PC-3 (cell line): ENCODE measurements at regions of chr12 and their contacts with region 1.

Region 1: DNA sequence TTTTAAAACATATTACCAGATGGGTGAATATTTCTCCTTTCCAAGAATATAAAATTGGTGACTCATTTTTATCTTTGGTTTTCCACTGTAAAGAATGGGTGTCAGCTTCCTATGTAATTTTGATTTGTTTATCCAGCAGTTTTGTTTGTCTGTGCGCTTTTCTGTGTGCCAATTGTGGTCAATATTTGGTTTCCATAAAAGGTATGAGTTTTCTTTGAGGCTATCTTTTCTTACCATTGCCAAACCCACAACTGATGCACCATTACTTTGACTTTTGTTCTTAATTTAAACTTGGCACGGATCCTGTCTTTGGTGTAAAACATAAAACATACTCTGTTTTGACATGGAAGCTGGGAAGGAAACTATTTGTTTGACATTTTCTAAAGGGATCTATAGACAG is 78.8 kb upstream of the NAV3 start:
- DNase-seq: peak; percentile 82
- ATAC-seq: peak; percentile 95
- H3K4me3 ChIP-seq: no peak overlapping the region
- H3K27ac ChIP-seq: no peak overlapping the region
- H3K4me1 ChIP-seq: peaks cover 13% of the 10 kb centered on the region
- H3K27me3 ChIP-seq: peaks cover 40% of the 10 kb centered on the region
- CTCF ChIP-seq: no peak

Region 2: DNA sequence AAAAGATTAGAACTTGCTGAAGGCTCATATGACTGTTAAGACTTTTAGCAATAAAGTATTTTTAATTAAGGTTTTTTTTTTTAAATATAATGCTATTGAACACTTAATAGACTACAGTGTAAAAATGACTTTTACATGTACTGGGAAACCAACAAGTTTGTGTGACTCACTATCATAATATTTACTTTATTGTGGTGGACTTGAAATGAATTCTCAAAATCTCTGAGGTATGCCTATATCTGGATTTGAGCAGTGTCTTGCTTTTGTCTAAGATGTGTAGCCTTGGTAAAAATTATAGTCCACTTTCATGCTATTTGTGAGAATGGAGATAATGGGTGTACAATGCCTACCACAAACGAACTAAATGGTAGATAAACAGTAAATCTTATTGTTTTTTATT is 44.8 kb after region 1 on chr12:
- CTCF ChIA-PET with region 1: no interaction called
- POLR2A ChIA-PET with region 1: no interaction called
- intact Hi-C with region 1: loop called (anchors 5 kb)
- DNase-seq: peak; percentile 70
- ATAC-seq: peak; percentile 90
- H3K4me3 ChIP-seq: no peak overlapping the region
- H3K27ac ChIP-seq: no peak overlapping the region
- H3K4me1 ChIP-seq: peaks cover 8% of the 10 kb centered on the region
- H3K27me3 ChIP-seq: no peaks in the 10 kb centered on the region
- CTCF ChIP-seq: no peak

Region 3: GRCh38 chr12:77925536-77926108 is 173.7 kb after region 1 on chr12:
- CTCF ChIA-PET with region 1: interaction called, 3 read pairs
- POLR2A ChIA-PET with region 1: no interaction called
- intact Hi-C with region 1: loop called (anchors 1 kb)
- DNase-seq: peak; percentile 90
- ATAC-seq: peak; percentile 100
- H3K4me3 ChIP-seq: no peak overlapping the region
- H3K27ac ChIP-seq: no peak overlapping the region
- H3K4me1 ChIP-seq: no peaks in the 10 kb centered on the region
- H3K27me3 ChIP-seq: peaks cover 26% of the 10 kb centered on the region
- CTCF ChIP-seq: peak; percentile 100

Region 4: DNA sequence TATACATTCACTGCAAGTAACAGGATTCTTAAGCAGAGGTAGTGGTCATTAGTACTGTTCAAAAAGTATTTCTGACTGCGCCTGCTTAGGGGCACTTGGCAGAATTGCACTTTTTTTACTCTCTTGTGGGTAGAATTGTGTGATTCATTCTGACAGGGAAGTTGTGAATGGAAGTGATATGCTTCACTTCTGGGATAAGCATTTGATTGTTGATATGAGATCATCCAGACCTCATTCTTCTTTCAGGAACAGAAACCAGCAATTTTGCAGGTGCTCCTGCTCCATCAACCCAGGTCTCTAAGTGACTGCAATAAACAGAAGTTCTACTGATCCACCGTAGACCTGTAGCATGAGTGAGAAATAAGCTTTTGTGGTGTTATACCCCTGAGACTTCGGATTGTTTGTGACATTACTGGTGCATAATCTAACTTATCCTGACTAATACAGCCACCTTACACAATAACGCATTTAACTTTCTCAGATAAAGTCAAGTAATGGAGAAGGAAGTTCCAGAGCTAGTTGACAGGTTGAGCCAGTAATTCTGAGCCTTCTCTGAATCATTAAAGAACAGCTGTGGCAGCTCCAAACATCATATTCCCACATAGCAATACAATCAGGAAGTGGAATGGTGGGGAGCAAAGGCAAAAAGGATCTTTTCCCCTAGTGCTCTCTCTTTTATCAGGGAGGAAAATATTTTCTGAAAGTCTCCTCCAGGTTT is 1500.6 kb after region 1 on chr12:
- CTCF ChIA-PET with region 1: no interaction called
- POLR2A ChIA-PET with region 1: no interaction called
- intact Hi-C with region 1: loop called (anchors 10 kb)
- DNase-seq: peak; percentile 49
- ATAC-seq: no peak
- H3K4me3 ChIP-seq: no peak overlapping the region
- H3K27ac ChIP-seq: no peak overlapping the region
- H3K4me1 ChIP-seq: peaks cover 44% of the 10 kb centered on the region
- H3K27me3 ChIP-seq: no peaks in the 10 kb centered on the region
- CTCF ChIP-seq: no peak